ENCODE measurements at regions of chr1 and their contacts with region 1.

Region 1: GRCh38 chr1:212035123-212035834 is at the starts of genes DTL and INTS7:
- DNase-seq: peak; percentile 94 to 99 (median 99)
- ATAC-seq: peak; percentile 93
- H3K4me3 ChIP-seq: peak within 1 kb of the TSS; percentile 99
- H3K4me3 Mint-ChIP-seq: peak within 1 kb of the TSS; percentile 86 to 100 (median 98)
- H3K27ac ChIP-seq: peak within 1 kb of the TSS; percentile 70
- H3K27ac Mint-ChIP-seq: peak within 1 kb of the TSS; percentile 95 to 99 (median 98)
- H3K4me1 ChIP-seq: peaks cover 20 to 23% of the 10 kb centered on the region in 2 donors
- H3K4me1 Mint-ChIP-seq: peaks cover 18 to 68% (median 54%) of the 10 kb centered on the region in 7 donors
- H3K27me3 ChIP-seq: no peaks in the 10 kb centered on the region
- H3K27me3 Mint-ChIP-seq: peaks cover 0 to 5% (median 0%) of the 10 kb centered on the region in 5 donors
- total RNA-seq, gene DTL: 0.27 to 63.0 (median 0.78) TPM
- total RNA-seq, gene INTS7: 7.3 to 33.5 (median 8.6) TPM

Region 2: DNA sequence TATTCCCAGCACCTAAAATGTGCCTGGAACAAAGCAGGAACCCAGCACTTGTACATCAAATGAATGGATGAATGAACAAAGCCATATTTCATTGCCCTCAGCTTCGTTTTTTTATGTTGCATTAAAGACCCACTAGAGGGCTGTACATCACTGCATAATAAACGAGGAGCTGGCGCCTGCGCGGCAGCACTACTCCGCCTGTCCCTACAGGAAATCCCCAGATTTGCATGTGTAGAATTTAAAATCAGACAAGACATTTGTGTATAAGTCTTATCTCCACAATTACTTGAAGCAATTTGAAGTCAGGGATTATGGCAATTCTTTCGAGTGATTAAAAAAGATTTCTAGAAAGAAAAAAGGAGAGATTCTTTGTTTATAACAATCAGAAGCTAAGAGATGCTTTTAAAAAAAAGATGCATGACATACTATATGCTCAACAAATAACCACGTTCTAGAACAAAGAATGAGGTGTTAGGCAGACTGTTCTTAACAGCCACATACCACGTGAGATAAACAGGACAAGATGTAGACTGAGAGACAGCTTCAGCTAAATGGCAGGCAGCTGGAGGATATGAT is 354.4 kb before region 1 on chr1:
- CTCF ChIA-PET with region 1: interaction called, 6 read pairs
- POLR2A ChIA-PET with region 1: no interaction called
- intact Hi-C with region 1: loop called (anchors 1 kb)
- DNase-seq: peak; percentile 44 to 85 (median 78)
- ATAC-seq: peak; percentile 98
- H3K4me3 ChIP-seq: no peak overlapping the region
- H3K4me3 Mint-ChIP-seq: peak overlapping the region in 9 of 10 donors; percentile 19 to 59 (median 50)
- H3K27ac ChIP-seq: peak overlapping the region; percentile 66
- H3K27ac Mint-ChIP-seq: peak overlapping the region; percentile 79 to 95 (median 87)
- H3K4me1 ChIP-seq: peaks cover 10 to 11% of the 10 kb centered on the region in 2 donors
- H3K4me1 Mint-ChIP-seq: peaks cover 9 to 22% (median 14%) of the 10 kb centered on the region in 7 donors
- H3K27me3 ChIP-seq: no peaks in the 10 kb centered on the region
- H3K27me3 Mint-ChIP-seq: no peaks in the 10 kb centered on the region

Region 3: DNA sequence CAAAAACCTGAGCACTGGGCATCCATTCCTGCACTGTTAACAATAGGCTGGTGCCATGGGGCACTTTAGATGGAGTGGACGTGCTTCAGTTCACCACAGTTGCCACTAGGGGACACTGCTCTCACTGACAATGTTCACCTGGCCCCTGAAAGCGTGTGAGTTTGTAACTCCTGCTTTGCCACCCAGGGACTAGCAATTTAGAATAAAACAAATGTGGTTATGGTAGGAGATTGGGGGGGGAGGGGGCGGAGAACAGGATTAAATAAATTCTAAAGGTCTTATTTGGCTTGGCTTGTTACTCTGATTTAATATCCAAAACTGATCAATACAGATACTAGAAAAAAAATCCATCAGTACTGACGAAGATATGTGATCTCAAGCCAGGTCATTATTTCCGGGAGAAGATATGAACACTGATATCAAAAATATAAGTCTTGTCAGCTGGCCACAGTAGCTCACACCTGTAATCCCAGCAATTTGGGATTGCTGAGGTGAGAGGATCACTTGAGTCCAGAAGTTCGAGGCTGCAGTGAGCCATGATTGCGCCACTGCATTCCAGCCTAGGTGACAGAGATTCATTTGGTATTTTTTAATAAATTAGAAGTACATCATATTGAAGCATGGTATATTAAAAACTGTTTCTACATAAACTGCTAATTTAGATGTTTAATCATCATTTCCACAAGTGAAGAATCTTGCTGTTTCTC is 23.1 kb before region 1 on chr1:
- CTCF ChIA-PET with region 1: interaction called, 4 read pairs
- POLR2A ChIA-PET with region 1: no interaction called
- intact Hi-C with region 1: loop called (anchors 1 kb)
- DNase-seq: peak; percentile 16 to 55 (median 46)
- ATAC-seq: peak; percentile 100
- H3K4me3 ChIP-seq: no peak overlapping the region
- H3K4me3 Mint-ChIP-seq: no peak overlapping the region
- H3K27ac ChIP-seq: no peak overlapping the region
- H3K27ac Mint-ChIP-seq: no peak overlapping the region
- H3K4me1 ChIP-seq: no peaks in the 10 kb centered on the region
- H3K4me1 Mint-ChIP-seq: peaks cover 0 to 3% (median 0%) of the 10 kb centered on the region in 7 donors
- H3K27me3 ChIP-seq: no peaks in the 10 kb centered on the region
- H3K27me3 Mint-ChIP-seq: no peaks in the 10 kb centered on the region

Region 4: GRCh38 chr1:212432706-212433576 is 397.7 kb after region 1 on chr1 and contains the start of gene NENF:
- CTCF ChIA-PET with region 1: no interaction called
- POLR2A ChIA-PET with region 1: interaction called, 3 read pairs
- intact Hi-C with region 1: loop called (anchors 1 kb)
- DNase-seq: peak; percentile 53 to 85 (median 72)
- ATAC-seq: peak; percentile 99
- H3K4me3 ChIP-seq: peak within 1 kb of the TSS; percentile 62
- H3K4me3 Mint-ChIP-seq: peak within 1 kb of the TSS; percentile 77 to 87 (median 82)
- H3K27ac ChIP-seq: peak within 1 kb of the TSS; percentile 77
- H3K27ac Mint-ChIP-seq: peak within 1 kb of the TSS; percentile 42 to 86 (median 63)
- H3K4me1 ChIP-seq: peaks cover 9 to 21% of the 10 kb centered on the region in 2 donors
- H3K4me1 Mint-ChIP-seq: peaks cover 18 to 44% (median 30%) of the 10 kb centered on the region in 7 donors
- H3K27me3 ChIP-seq: no peaks in the 10 kb centered on the region
- H3K27me3 Mint-ChIP-seq: peaks cover 0 to 4% (median 0%) of the 10 kb centered on the region in 5 donors
- total RNA-seq, gene NENF: 16.0 to 23.5 (median 21.0) TPM

Region 5: GRCh38 chr1:212566522-212567479 is 531.5 kb after region 1 on chr1:
- CTCF ChIA-PET with region 1: no interaction called
- POLR2A ChIA-PET with region 1: no interaction called
- intact Hi-C with region 1: loop called in 1 of 2 experiments (anchors 10 kb)
- DNase-seq: peak in 7 of 9 donors; percentile 23 to 66 (median 30)
- ATAC-seq: peak; percentile 96
- H3K4me3 ChIP-seq: peak overlapping the region; percentile 78
- H3K4me3 Mint-ChIP-seq: peak overlapping the region; percentile 80 to 98 (median 88)
- H3K27ac ChIP-seq: peak overlapping the region; percentile 31
- H3K27ac Mint-ChIP-seq: peak overlapping the region; percentile 62 to 90 (median 77)
- H3K4me1 ChIP-seq: peaks cover 0 to 6% of the 10 kb centered on the region in 2 donors
- H3K4me1 Mint-ChIP-seq: peaks cover 9 to 27% (median 15%) of the 10 kb centered on the region in 7 donors
- H3K27me3 ChIP-seq: no peaks in the 10 kb centered on the region
- H3K27me3 Mint-ChIP-seq: peaks cover 0 to 43% (median 0%) of the 10 kb centered on the region in 5 donors

Region 6: GRCh38 chr1:212857992-212858460 is 822.7 kb after region 1 on chr1 and contains the start of gene FLVCR1:
- CTCF ChIA-PET with region 1: no interaction called
- POLR2A ChIA-PET with region 1: interaction called, 3 read pairs
- intact Hi-C with region 1: loop called in 1 of 2 experiments (anchors 5 kb)
- DNase-seq: peak; percentile 74 to 96 (median 80)
- ATAC-seq: peak; percentile 99
- H3K4me3 ChIP-seq: peak within 1 kb of the TSS; percentile 72
- H3K4me3 Mint-ChIP-seq: peak within 1 kb of the TSS in 6 of 10 donors; percentile 95 to 97 (median 96)
- H3K27ac ChIP-seq: peak within 1 kb of the TSS; percentile 68
- H3K27ac Mint-ChIP-seq: peak within 1 kb of the TSS; percentile 77 to 96 (median 89)
- H3K4me1 ChIP-seq: peaks cover 9 to 16% of the 10 kb centered on the region in 2 donors
- H3K4me1 Mint-ChIP-seq: peaks cover 9 to 34% (median 21%) of the 10 kb centered on the region in 7 donors
- H3K27me3 ChIP-seq: no peaks in the 10 kb centered on the region
- H3K27me3 Mint-ChIP-seq: no peaks in the 10 kb centered on the region
- total RNA-seq, gene FLVCR1: 7.4 to 12.2 (median 8.2) TPM

Measured in naive thymus-derived CD4-positive, alpha-beta T cell (primary cell).